ENCODE measurements at regions of chr9 and their contacts with region 1.

Region 1: DNA sequence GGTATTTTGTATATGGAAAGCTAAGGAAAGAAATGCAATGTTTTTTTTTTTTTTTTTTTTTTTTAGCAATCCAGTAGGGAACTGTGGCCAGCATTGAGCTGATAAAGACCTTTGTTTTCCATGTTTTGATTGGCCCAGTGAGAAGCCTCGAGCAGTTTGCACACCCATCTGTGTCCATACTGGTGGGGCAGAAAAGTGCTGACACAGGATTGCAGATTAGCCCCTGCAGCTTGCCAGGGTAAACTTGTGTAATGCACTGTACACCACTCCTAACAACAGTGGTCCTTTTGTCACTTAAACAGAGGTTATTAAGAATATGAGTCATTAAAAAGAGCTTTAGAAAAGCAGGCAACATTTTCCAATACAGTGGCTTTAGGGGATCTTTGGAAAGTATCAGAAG is 132.8 kb upstream of the CDKN2B start:
- DNase-seq: peak; percentile 52
- H3K4me3 Mint-ChIP-seq: no peak overlapping the region
- H3K27ac Mint-ChIP-seq: peak overlapping the region; percentile 55
- H3K4me1 Mint-ChIP-seq: peaks cover 19% of the 10 kb centered on the region
- H3K27me3 Mint-ChIP-seq: no peaks in the 10 kb centered on the region
- CTCF ChIP-seq: no peak

Region 2: DNA sequence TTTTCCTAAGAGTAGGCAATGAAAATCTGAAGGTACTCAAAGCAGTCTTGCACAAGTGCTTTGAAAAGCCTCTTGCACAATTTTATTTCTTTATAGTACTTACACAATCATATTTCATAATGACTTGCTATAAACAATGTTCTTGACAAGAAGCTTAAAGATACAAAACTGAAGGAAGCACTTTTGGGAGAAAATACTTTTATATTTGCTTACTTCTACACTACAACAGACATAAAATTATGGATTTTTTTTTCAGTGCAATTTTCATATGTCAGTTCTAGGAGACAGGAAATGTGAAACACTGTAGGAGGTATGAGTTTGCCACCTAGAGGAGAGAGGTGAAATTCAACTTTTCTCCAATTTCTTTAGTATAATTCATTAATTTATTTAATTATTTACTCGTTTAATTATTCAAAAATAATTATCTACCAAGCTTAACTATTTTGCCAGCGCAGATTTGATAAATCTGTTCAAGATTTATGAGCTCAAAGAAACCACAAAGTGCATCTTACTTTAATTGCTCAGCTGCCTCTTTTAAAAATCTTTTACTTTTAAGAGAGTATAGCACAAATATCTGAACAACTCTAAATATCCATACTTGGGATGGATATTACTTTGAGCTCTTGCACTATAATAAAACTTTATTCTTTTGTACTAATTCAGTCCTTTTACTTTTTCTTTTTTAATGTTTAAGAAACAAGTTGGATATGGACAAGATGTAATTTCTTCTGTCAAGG is 103.8 kb before region 1 on chr9:
- CTCF ChIA-PET with region 1: interaction called, 3 read pairs
- intact Hi-C with region 1: loop called (anchors 5 kb)
- DNase-seq: no peak
- H3K4me3 Mint-ChIP-seq: no peak overlapping the region
- H3K27ac Mint-ChIP-seq: no peak overlapping the region
- H3K4me1 Mint-ChIP-seq: peaks cover 26% of the 10 kb centered on the region
- H3K27me3 Mint-ChIP-seq: no peaks in the 10 kb centered on the region
- CTCF ChIP-seq: peak; percentile 32

Region 3: DNA sequence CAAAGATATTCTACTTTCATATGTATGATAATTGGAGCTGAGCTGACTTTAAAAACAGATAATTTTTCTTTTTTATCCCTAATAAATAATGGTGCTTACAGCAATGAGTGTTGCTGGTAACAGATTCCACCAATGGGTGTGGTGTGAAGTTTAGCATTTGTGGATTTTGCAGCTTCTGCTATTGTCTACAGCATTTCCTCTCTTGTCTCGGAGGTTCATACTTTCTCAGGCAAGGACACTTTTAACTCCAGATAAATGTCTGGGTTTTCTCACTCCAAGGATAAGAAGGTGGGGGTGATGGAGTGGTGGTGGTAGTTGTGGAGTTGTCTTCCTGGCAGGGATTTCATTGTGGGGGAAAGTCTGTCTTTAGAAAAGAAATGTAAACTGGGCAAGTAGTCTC is 12.8 kb before region 1 on chr9:
- CTCF ChIA-PET with region 1: interaction called, 5 read pairs
- intact Hi-C with region 1: loop called (anchors 2 kb)
- DNase-seq: no peak
- H3K4me3 Mint-ChIP-seq: no peak overlapping the region
- H3K27ac Mint-ChIP-seq: no peak overlapping the region
- H3K4me1 Mint-ChIP-seq: peaks cover 34% of the 10 kb centered on the region
- H3K27me3 Mint-ChIP-seq: no peaks in the 10 kb centered on the region
- CTCF ChIP-seq: no peak

Region 4: GRCh38 chr9:22211593-22212360 is 69.9 kb after region 1 on chr9:
- CTCF ChIA-PET with region 1: no interaction called
- intact Hi-C with region 1: no loop called
- DNase-seq: peak; percentile 54
- H3K4me3 Mint-ChIP-seq: no peak overlapping the region
- H3K27ac Mint-ChIP-seq: peak overlapping the region; percentile 90
- H3K4me1 Mint-ChIP-seq: peaks cover 37% of the 10 kb centered on the region
- H3K27me3 Mint-ChIP-seq: no peaks in the 10 kb centered on the region
- CTCF ChIP-seq: no peak

Measured in Calu3 (cell line).